HEK293 (cell line): ENCODE measurements at regions of chr21 and their contacts with region 1.

Region 1: GRCh38 chr21:42145569-42146272 is 73.2 kb upstream of the ABCG1 start:
- H3K4me3 ChIP-seq: no peak overlapping the region
- H3K27ac ChIP-seq: no peak overlapping the region
- H3K4me1 ChIP-seq: no peaks in the 10 kb centered on the region
- CTCF ChIP-seq: peak; percentile 78

Region 2: DNA sequence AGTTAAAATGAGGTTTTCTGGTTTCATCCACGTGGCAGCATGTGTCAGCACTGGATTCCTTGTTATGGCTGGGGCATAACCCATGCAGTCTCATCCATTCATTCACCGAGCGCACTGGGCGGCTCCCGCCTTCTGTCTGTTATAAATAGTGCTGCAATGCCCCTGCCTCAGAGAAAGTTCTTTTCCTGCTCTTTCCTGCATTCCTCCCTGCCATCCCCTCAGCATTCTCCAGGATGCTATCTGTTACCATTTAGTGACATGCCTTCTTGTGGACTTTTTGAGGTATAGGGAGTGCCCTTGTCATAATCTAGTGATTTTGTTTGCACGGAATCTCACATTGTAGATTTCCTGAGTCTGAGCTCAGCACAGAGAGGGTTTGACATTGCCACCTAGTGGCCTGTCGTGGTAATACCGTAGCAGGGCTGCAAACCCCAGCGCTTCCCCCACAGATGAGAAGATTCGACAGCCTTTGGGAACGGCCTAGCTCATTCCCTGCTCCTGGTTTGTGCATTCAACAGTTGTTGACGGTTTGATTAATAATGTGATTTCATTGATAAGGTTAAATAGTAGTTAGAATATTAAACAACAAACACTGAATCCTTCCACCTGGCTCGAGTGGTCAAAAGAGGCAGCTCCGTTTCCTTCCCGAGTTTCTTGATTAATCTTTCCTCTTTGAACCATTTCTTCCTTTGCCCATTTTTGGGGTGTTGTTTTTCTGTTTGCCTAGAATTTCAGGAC is 28.3 kb before region 1 on chr21:
- CTCF ChIA-PET with region 1: interaction called, 10 read pairs
- POLR2A ChIA-PET with region 1: no interaction called
- H3K4me3 ChIP-seq: no peak overlapping the region
- H3K27ac ChIP-seq: no peak overlapping the region
- H3K4me1 ChIP-seq: no peaks in the 10 kb centered on the region
- CTCF ChIP-seq: peak; percentile 82; the same call in 1 of the 2 replicates

Region 3: GRCh38 chr21:42156690-42157577 is 11.2 kb after region 1 on chr21:
- CTCF ChIA-PET with region 1: interaction called, 23 read pairs
- POLR2A ChIA-PET with region 1: no interaction called
- H3K4me3 ChIP-seq: no peak overlapping the region
- H3K27ac ChIP-seq: no peak overlapping the region
- H3K4me1 ChIP-seq: no peaks in the 10 kb centered on the region
- CTCF ChIP-seq: no peak

Region 4: GRCh38 chr21:42164064-42164789 is 18.5 kb after region 1 on chr21:
- CTCF ChIA-PET with region 1: interaction called, 23 read pairs
- POLR2A ChIA-PET with region 1: no interaction called
- H3K4me3 ChIP-seq: no peak overlapping the region
- H3K27ac ChIP-seq: no peak overlapping the region
- H3K4me1 ChIP-seq: no peaks in the 10 kb centered on the region
- CTCF ChIP-seq: peak; percentile 72; the same call in 1 of the 2 replicates

Region 5: DNA sequence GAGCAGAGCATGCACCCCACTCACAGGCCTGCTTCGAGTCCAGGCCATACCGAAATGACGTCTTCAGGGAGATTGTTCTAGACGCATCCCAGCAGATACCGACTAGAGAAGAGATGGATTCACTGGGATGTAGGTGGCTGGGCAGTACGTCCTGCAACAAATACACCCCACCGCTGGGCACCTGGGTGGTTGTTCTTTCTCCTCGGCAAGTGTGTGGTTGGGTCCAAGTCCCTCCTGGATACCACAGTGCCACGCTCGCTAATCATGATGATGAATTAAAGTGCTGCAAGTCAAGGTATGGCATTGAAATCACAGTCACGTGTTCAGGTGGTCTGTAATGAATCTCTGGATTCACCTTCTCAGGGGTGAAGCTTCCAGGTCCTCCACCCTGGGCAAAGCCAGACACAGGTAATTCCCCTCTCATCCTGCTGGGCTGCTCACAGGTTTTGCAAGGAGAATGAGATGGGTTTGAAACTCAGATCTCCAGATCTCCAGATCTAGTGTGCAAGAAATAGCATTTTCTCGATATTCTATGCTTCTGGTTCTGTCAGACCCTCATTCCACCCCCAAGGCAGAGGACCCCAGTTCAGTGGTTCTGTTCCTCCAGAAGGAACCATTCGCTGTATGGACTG is 303.7 kb after region 1 on chr21:
- CTCF ChIA-PET with region 1: interaction called, 11 read pairs
- POLR2A ChIA-PET with region 1: no interaction called
- H3K4me3 ChIP-seq: no peak overlapping the region
- H3K27ac ChIP-seq: no peak overlapping the region
- H3K4me1 ChIP-seq: no peaks in the 10 kb centered on the region
- CTCF ChIP-seq: no peak

Region 6: DNA sequence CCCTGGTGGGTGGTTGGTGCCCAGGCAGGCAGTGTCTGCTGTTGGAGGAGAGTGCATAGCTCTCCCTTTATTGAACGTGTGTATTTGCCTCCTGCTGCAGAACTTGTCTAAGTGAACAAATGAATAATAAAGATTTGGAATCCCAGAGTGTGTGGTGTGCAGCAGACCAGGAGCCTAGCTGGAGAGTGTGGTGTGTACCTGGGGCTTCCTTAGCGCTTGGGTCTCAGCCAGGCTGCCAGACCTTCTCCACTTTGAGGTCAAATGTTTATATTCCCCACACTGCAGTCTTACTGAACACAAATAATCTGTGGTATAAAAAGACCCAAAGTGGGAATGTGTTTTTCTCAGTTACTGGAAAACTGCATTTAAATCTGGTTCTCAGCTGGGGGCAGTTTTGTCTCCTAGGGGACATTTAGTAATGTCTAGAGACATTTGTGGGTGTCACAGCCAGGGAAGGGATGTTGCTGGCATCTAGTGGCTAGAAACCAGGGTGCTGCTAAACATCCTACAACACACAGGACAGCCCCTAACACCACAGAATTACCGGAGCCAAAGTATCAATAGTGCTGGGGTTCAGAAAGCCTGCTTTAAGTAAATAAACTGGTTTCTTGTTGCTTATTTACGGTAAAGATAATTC is 391.5 kb after region 1 on chr21:
- CTCF ChIA-PET with region 1: interaction called, 10 read pairs
- POLR2A ChIA-PET with region 1: no interaction called
- H3K4me3 ChIP-seq: no peak overlapping the region
- H3K27ac ChIP-seq: no peak overlapping the region
- H3K4me1 ChIP-seq: peaks cover 10% of the 10 kb centered on the region; the same call in 1 of the 2 replicates
- CTCF ChIP-seq: peak; percentile 73